HCT116 (cell line): ENCODE measurements at regions of chr14 and their contacts with region 1.

Region 1: GRCh38 chr14:99320105-99320572 is 48.1 kb upstream of the BCL11B start:
- DNase-seq: peak; percentile 21
- ATAC-seq: peak; percentile 87
- H3K4me3 ChIP-seq: peak overlapping the region in 1 of 2 experiments; percentile 33; a peak in 1 of 4 replicates
- H3K27ac ChIP-seq: no peak overlapping the region
- H3K4me1 ChIP-seq: peaks cover 8 to 23% of the 10 kb centered on the region in 2 experiments; a peak in 3 of 4 replicates
- H3K27me3 ChIP-seq: no peaks in the 10 kb centered on the region
- CTCF ChIP-seq: peak; percentile 75 to 98 (median 96)
- POLR2A ChIP-seq: no peak
- RAD21 ChIP-seq: peak; percentile 69

Region 2: GRCh38 chr14:99215277-99215676 is 104.9 kb before region 1 on chr14:
- CTCF ChIA-PET with region 1: no interaction called
- POLR2A ChIA-PET with region 1: no interaction called
- RAD21 ChIA-PET with region 1: no interaction called
- intact Hi-C with region 1: no loop called
- DNase-seq: no peak
- ATAC-seq: no peak
- H3K4me3 ChIP-seq: no peak overlapping the region
- H3K27ac ChIP-seq: no peak overlapping the region
- H3K4me1 ChIP-seq: peaks cover 4% of the 10 kb centered on the region in 2 experiments
- H3K27me3 ChIP-seq: no peaks in the 10 kb centered on the region
- CTCF ChIP-seq: no peak
- POLR2A ChIP-seq: no peak
- RAD21 ChIP-seq: no peak

Region 3: DNA sequence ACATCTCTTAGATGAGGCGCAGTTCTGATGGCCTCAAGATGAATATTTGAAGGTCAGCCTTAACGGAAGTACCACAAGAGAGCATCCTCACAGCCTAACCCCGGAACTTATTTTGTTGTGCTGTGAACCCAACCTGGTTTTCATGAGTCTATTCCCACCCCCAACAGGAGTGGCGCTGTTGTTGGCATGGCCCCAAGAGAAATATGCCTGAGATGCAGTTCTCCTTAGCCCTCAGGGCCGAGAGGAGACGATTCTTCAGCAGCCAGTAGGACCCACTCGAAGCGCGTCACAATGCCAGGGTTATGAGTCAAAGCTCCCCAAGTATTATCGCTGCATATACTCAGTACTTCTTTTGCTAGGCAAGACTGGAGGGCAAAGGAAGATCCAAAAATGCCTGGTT is 23.6 kb before region 1 on chr14:
- CTCF ChIA-PET with region 1: interaction called, 16 read pairs
- POLR2A ChIA-PET with region 1: no interaction called
- RAD21 ChIA-PET with region 1: no interaction called
- intact Hi-C with region 1: no loop called
- DNase-seq: peak; percentile 63
- ATAC-seq: peak; percentile 94
- H3K4me3 ChIP-seq: peak overlapping the region; percentile 12 to 35
- H3K27ac ChIP-seq: no peak overlapping the region
- H3K4me1 ChIP-seq: peaks cover 0 to 8% of the 10 kb centered on the region in 2 experiments; a peak in 3 of 4 replicates
- H3K27me3 ChIP-seq: no peaks in the 10 kb centered on the region
- CTCF ChIP-seq: peak; percentile 34 to 82 (median 77); a peak in 4 of 6 replicates
- POLR2A ChIP-seq: no peak
- RAD21 ChIP-seq: 0 out of 2 replicates have a peak, but pooled peaks have one; percentile 5

Region 4: GRCh38 chr14:99304209-99304608 is 15.9 kb before region 1 on chr14:
- CTCF ChIA-PET with region 1: interaction called, 17 read pairs
- POLR2A ChIA-PET with region 1: no interaction called
- RAD21 ChIA-PET with region 1: no interaction called
- intact Hi-C with region 1: no loop called
- DNase-seq: no peak
- ATAC-seq: no peak
- H3K4me3 ChIP-seq: no peak overlapping the region
- H3K27ac ChIP-seq: no peak overlapping the region
- H3K4me1 ChIP-seq: no peaks in the 10 kb centered on the region
- H3K27me3 ChIP-seq: no peaks in the 10 kb centered on the region; the same call in 1 of the 2 replicates
- CTCF ChIP-seq: no peak
- POLR2A ChIP-seq: no peak
- RAD21 ChIP-seq: no peak

Region 5: GRCh38 chr14:99309220-99309766 is 10.8 kb before region 1 on chr14:
- CTCF ChIA-PET with region 1: interaction called, 17 read pairs
- POLR2A ChIA-PET with region 1: no interaction called
- RAD21 ChIA-PET with region 1: no interaction called
- intact Hi-C with region 1: no loop called
- DNase-seq: no peak
- ATAC-seq: no peak
- H3K4me3 ChIP-seq: no peak overlapping the region
- H3K27ac ChIP-seq: no peak overlapping the region
- H3K4me1 ChIP-seq: no peaks in the 10 kb centered on the region
- H3K27me3 ChIP-seq: peaks cover 12% of the 10 kb centered on the region; the same call in 1 of the 2 replicates
- CTCF ChIP-seq: no peak
- POLR2A ChIP-seq: no peak
- RAD21 ChIP-seq: no peak

Region 6: GRCh38 chr14:99333841-99334635 is 13.9 kb after region 1 on chr14:
- CTCF ChIA-PET with region 1: interaction called, 13 read pairs
- POLR2A ChIA-PET with region 1: no interaction called
- RAD21 ChIA-PET with region 1: no interaction called
- intact Hi-C with region 1: no loop called
- DNase-seq: no peak
- ATAC-seq: no peak
- H3K4me3 ChIP-seq: no peak overlapping the region
- H3K27ac ChIP-seq: no peak overlapping the region
- H3K4me1 ChIP-seq: no peaks in the 10 kb centered on the region
- H3K27me3 ChIP-seq: peaks cover 26% of the 10 kb centered on the region
- CTCF ChIP-seq: no peak
- POLR2A ChIP-seq: no peak
- RAD21 ChIP-seq: no peak

Region 7: DNA sequence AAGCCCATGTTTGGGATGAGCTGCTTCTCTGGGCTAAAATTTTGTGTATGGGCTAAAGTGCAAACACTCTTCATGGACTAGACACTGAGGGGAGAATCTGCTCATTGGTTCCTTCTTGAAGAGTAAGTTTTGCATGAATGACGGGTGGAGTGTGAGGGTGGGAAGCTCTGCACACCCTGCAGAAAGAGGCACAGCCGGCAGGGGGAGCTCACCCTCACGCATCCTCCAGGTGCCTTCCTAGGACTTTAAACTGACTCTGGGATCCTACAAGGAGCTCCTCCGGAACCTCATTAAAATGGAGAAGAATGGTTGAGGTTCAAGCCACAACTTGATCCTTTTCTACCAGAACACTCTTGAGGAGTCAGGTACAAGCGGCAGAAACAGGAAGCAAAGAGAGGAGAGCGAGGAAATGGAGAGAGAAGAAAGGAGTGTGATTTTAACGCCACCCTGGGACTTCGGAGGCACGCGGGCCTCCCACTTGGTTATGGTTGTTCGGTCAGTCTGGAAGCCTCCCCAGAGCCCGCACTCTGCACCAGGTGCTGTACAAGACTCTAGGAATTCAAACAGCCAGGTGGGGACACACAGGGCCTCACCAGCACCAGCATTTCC is 73.0 kb after region 1 on chr14:
- CTCF ChIA-PET with region 1: interaction called, 11 read pairs
- POLR2A ChIA-PET with region 1: no interaction called
- RAD21 ChIA-PET with region 1: interaction called in 1 of 2 experiments, 4 read pairs
- intact Hi-C with region 1: no loop called
- DNase-seq: peak; percentile 15
- ATAC-seq: peak; percentile 83
- H3K4me3 ChIP-seq: no peak overlapping the region
- H3K27ac ChIP-seq: no peak overlapping the region
- H3K4me1 ChIP-seq: peaks cover 0 to 12% of the 10 kb centered on the region in 2 experiments; a peak in 2 of 4 replicates
- H3K27me3 ChIP-seq: no peaks in the 10 kb centered on the region
- CTCF ChIP-seq: peak; percentile 34 to 97 (median 94); a peak in 5 of 6 replicates
- POLR2A ChIP-seq: no peak
- RAD21 ChIP-seq: peak; percentile 43; the same call in 1 of the 2 replicates

Region 8: DNA sequence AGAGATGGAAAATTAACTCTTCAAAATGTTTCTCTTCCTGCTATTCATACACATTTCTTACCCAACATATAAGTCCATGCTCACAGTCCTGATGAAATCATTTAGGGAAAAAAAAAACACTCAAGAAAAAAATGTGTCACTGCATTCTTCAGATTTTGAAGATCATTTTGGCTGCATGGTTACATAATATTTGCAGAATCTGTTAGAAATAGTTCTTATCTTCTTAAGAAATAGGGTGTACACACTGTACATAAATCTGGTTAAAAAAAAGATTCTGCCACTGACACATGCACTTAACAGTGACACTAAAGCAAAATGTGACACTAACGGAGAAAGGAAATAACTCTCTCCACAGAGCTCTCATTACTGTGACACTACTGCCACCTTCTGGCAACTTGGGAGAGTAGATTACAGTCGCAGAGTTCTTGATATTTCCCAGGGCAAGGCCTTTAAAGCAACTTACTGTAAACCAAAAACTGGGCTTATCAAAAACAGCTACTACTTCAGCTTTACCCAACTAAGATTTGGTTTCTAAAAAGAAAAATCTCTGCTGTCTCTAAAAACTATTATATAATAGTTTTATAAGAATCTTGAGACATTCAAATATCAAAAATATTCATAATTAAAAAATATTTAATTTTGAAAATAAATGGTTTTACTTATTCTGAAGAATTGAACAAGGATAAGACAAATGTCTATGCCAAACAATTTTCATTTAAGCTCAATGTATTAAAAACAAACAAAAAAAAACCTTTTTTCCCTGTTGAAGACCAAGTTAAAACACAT is 95.5 kb after region 1 on chr14:
- CTCF ChIA-PET with region 1: interaction called, 69 read pairs
- POLR2A ChIA-PET with region 1: interaction called, 4 read pairs
- RAD21 ChIA-PET with region 1: interaction called in 1 of 2 experiments, 5 read pairs
- intact Hi-C with region 1: loop called (anchors 1 kb)
- DNase-seq: peak; percentile 69
- ATAC-seq: peak; percentile 96
- H3K4me3 ChIP-seq: no peak overlapping the region
- H3K27ac ChIP-seq: no peak overlapping the region
- H3K4me1 ChIP-seq: 0 out of 4 replicates have a peak, but pooled peaks cover 0 to 4% of the 10 kb centered on the region in 2 experiments
- H3K27me3 ChIP-seq: no peaks in the 10 kb centered on the region
- CTCF ChIP-seq: peak; percentile 71 to 89 (median 71); a peak in 5 of 6 replicates
- POLR2A ChIP-seq: no peak
- RAD21 ChIP-seq: peak; percentile 85